Activated CD4-positive, alpha-beta T cell treated with anti-CD3 and anti-CD28 coated beads, Interleukin-2, amount 10 ng/mL, durations not matched to agents 24 days and 14 days (primary cell): ENCODE measurements at regions of chr4 and their contacts with region 1.

Region 1: DNA sequence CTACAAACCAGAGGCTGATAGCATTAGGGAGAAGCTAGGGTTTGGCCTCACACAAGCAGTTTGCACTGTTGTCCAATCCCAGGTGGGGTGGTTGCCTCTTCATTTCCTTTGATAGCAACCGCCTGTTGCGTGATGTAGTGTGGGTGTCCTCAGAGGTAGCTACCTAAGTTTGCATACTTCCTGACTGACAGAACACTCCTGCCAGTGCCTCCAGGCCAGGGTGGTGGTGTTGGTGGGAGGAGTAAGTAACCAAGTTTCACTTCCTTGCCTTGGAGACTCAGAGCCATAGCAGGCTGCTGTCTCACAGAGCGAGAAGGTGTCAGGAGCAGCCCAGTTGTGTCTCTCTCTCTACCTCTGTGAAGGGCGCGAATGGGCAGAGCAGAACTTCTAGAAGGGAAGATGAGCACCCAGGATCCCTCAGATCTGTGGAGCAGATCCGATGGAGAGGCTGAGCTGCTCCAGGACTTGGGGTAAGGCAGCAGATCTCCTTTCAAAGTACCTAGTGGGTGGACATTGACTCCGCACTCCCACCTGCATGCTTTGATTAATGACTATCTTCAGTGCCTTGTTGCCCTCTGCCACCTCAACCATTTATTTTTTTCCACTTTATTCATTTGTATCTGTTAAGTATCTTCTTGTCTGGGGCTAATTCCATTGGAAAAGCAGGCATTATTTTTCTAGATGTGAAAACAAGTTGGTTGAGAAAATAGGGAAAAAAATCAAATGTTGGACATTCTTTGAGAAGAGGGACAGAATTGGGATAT is at the start of gene DAPP1:
- DNase-seq: peak; percentile 95
- H3K4me3 Mint-ChIP-seq: peak within 1 kb of the TSS; percentile 95
- H3K27ac Mint-ChIP-seq: peak within 1 kb of the TSS; percentile 97
- H3K4me1 Mint-ChIP-seq: peaks cover 70% of the 10 kb centered on the region
- H3K27me3 Mint-ChIP-seq: no peaks in the 10 kb centered on the region
- total RNA-seq, gene DAPP1: 28.4 and 29.5 TPM in 2 replicates

Region 2: DNA sequence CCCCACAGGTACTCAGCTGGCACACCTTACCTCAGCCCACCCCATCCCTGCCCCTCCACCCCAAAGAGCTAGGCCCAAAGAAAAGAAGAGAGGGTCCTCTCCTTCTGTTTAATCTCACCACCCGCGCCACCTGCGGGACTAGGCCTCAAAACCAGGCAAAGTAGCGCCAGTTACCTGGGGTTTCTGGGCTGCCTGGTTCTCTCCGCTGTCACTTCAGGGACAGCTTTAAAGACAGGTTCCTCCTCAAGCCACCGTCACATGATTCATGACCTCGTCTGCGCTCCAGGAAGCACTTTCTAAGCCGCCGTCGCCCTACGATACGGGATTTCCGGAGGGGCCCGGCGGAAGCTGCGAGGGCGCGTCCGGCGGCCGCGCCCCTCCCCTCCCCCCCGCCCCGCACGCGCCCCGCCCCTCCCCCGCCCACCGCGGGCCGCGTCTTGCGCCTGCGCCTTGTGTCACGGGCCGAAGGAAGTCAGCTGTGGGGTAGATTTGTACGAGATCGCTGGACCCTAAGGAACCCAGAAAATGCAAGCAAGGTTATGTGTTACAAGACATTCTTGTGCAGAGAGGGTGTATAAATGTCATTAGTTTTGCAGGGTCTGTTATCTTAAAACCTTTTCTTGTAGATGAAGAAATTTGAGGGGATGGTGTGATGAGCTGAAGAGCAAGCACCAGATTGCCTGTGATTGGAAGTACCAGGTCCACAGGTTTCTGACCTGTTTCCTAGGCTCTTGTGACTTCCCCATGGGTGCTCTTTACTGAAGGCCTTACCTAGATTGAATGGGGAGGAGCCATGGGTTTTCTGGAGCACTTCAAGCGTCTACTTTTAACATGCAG is 77.7 kb after region 1 on chr4 and contains the start of gene LAMTOR3:
- intact Hi-C with region 1: loop called (anchors 2 kb)
- DNase-seq: peak; percentile 96
- H3K4me3 Mint-ChIP-seq: peak within 1 kb of the TSS; percentile 94
- H3K27ac Mint-ChIP-seq: peak within 1 kb of the TSS; percentile 94
- H3K4me1 Mint-ChIP-seq: peaks cover 32% of the 10 kb centered on the region
- H3K27me3 Mint-ChIP-seq: no peaks in the 10 kb centered on the region
- total RNA-seq, gene LAMTOR3: 28.0 and 32.8 TPM in 2 replicates

Region 3: GRCh38 chr4:100008048-100008447 is 191.3 kb after region 1 on chr4:
- intact Hi-C with region 1: no loop called
- DNase-seq: no peak
- H3K4me3 Mint-ChIP-seq: no peak overlapping the region
- H3K27ac Mint-ChIP-seq: no peak overlapping the region
- H3K4me1 Mint-ChIP-seq: no peaks in the 10 kb centered on the region
- H3K27me3 Mint-ChIP-seq: peaks cover 4% of the 10 kb centered on the region

Region 4: DNA sequence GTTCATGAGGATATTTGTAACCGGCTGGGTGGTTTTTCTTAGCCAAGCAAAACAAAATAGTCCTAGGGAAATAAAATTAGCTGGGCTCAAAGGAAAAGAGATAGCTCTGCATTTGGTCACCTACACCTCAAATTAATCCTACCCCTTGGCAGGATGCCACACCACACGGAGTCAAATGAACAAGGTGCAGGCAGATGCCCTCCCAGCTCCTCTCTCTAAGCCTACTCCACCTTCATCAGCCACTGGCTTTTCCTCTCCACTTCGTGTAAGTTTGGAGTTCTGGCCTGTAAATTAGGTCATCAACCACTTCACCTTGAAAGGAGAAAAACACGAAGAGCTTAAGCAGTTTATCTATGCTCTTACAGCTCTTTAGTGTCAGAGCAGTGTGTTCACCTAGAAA is 372.1 kb after region 1 on chr4:
- intact Hi-C with region 1: no loop called
- DNase-seq: no peak
- H3K4me3 Mint-ChIP-seq: peak overlapping the region; percentile 76
- H3K27ac Mint-ChIP-seq: no peak overlapping the region
- H3K4me1 Mint-ChIP-seq: peaks cover 17% of the 10 kb centered on the region
- H3K27me3 Mint-ChIP-seq: peaks cover 44% of the 10 kb centered on the region